ENCODE measurements at regions of chr13 and their contacts with region 1.

Region 1: GRCh38 chr13:24717219-24717618 is 37.0 kb downstream of the ATP12A start:
- DNase-seq: no peak
- H3K4me3 ChIP-seq: no peak overlapping the region
- H3K27ac ChIP-seq: no peak overlapping the region
- H3K4me1 ChIP-seq: peaks cover 3% of the 10 kb centered on the region
- H3K27me3 ChIP-seq: no peaks in the 10 kb centered on the region
- CTCF ChIP-seq: no peak

Region 2: GRCh38 chr13:24605923-24606372 is 111.3 kb before region 1 on chr13:
- CTCF ChIA-PET with region 1: interaction called, 21 read pairs
- dilution Hi-C with region 1: no loop called
- in situ Hi-C with region 1: loop called (anchors 10 kb)
- intact Hi-C with region 1: no loop called
- DNase-seq: peak; percentile 36
- H3K4me3 ChIP-seq: no peak overlapping the region
- H3K27ac ChIP-seq: no peak overlapping the region
- H3K4me1 ChIP-seq: peaks cover 7% of the 10 kb centered on the region
- H3K27me3 ChIP-seq: no peaks in the 10 kb centered on the region
- CTCF ChIP-seq: peak; percentile 47 to 61

Region 3: DNA sequence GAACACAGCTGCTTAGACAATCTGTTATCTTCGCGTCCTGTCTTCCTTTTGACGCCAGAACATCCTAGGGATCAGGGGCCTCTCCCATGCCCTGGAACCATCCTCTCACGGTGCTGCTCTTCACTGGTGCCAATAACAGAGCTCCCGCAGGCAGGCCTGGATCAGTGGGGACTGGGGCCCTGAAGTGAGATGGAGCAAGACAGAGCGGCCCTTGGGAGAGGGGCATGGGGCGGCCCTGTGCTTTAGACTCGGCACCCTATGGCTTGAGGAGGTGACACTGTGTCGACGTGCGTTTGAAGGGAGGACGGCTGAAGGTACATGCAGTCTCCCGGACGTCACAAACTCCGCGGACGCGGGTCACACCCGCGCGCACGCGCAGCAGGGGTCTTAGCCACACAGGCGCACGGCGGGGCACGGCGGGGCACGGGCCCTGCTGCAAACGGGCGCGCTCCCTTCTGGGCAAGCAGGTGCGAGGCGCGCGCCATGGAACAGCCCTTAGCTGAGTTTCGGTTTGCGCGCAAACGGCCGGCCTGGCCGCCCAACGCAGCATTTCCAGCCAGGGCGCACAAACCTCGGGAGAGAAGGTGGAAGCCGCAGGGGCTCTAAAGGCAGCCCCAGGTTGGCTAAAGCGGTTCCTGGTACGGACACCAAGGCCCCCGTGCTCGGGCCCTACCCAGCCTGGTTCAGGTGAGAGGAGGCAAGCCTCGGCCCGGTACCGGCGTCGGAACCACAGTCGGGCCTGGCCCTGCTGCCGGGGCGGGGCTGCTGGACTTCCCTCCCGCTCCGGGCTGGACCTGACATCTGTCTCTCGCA is 30.2 kb after region 1 on chr13:
- CTCF ChIA-PET with region 1: no interaction called
- dilution Hi-C with region 1: no loop called
- in situ Hi-C with region 1: no loop called
- intact Hi-C with region 1: no loop called
- DNase-seq: peak; percentile 40
- H3K4me3 ChIP-seq: peak overlapping the region; percentile 8 to 51 (median 41)
- H3K27ac ChIP-seq: no peak overlapping the region
- H3K4me1 ChIP-seq: peaks cover 21% of the 10 kb centered on the region
- H3K27me3 ChIP-seq: peaks cover 22% of the 10 kb centered on the region
- CTCF ChIP-seq: no peak